KBM-7 (cell line): ENCODE measurements at regions of chr5 and their contacts with region 1.

Region 1: GRCh38 chr5:134586866-134587524 is 45.6 kb downstream of the SAR1B start:
- DNase-seq: peak; percentile 86

Region 2: GRCh38 chr5:134304311-134304710 is 282.7 kb before region 1 on chr5:
- in situ Hi-C with region 1: loop called (anchors 10 kb)
- DNase-seq: no peak